Posterior vena cava (tissue), 2 donors: ENCODE measurements at regions of chr1 and their contacts with region 1.

Region 1: DNA sequence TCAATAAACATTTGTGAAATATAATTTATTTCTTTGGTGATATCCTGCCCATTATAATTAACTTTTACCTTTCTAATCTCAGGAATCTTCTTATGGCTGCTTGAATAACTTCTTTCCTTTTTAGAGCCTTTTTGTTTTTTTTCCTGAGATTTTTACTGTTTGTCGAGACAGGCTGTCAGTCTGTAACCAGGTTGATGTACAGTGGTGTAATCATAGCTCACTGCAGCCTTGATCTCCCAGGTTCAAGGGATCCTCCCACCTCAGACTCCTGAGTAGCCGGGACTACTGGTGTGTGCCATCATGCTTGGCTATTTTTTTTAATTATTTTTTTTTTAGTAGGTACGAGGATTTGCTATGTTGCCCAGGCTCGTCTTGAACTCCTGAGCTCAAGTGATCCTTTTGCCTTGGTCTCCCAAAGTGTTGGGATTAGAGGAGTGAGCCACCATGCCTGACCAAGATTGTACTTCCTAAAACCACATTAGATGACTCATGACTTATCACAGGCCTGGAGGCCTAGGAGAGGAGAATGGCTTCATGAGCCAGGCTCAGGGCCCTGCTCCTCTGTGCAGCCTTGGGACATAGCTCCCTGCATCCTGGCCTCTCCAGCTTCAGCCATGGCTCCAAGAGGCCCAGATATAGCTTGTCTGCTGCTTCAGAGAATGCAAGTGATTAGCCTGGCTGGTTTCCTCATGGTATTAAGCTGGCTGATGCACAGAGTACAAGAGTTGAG is 48.6 kb downstream of the CTH start:
- DNase-seq: no peak

Region 2: DNA sequence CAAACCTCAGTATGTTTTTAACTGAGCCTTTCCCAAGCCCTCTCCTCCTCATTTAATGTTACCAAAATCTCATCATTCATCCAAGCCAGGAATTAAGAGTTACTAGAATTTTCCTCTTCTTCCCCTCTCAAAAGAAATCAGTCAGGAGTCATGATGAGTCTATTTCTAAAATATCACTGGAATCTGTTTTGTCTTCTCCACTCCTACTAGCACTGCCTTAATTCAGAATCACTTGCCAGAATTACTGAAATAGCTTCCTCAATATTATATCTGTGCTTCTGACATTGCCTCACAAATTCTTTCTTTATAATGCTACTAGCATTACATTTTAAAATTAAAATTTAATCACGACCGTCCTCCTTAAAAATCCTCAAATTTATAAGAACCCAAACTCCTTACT is 481.9 kb after region 1 on chr1:
- intact Hi-C with region 1: loop called in 1 of 2 experiments (anchors 5 kb)
- DNase-seq: no peak